Mammary epithelial cell (primary cell): ENCODE measurements at regions of chr7 and their contacts with region 1.

Region 1: GRCh38 chr7:41940760-41941343 is 238.0 kb upstream of the INHBA start:
- DNase-seq: peak; percentile 71
- H3K4me3 ChIP-seq: no peak overlapping the region
- H3K27ac ChIP-seq: no peak overlapping the region
- H3K4me1 ChIP-seq: peaks cover 5% of the 10 kb centered on the region
- H3K27me3 ChIP-seq: no peaks in the 10 kb centered on the region
- CTCF ChIP-seq: peak; percentile 71 to 77

Region 2: DNA sequence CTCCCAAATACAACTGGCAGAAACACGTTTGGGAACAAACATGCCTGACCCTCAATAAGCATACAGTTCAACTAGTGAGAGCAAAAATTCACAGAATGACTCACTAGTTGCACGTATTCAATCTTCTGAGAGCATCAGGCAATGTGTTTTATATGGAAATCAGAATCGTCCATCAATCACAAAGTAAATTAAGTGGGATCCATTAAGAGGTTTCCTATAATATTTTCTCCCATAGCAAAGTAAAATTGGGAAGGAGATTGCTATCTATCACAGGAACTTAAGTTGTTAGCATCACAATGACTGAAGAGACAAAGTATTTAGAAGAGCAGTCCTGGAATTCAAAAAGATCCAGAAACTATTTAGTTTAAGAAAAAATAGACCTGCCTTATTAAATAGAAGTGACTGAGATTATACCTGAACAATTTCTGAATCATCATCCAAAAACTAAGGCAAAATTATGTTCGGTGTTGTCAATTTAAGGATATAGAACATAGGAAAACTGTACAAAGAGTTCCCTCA is 266.3 kb before region 1 on chr7:
- CTCF ChIA-PET with region 1: no interaction called
- dilution Hi-C with region 1: no loop called
- in situ Hi-C with region 1: no loop called
- intact Hi-C with region 1: no loop called
- DNase-seq: no peak
- H3K4me3 ChIP-seq: no peak overlapping the region
- H3K27ac ChIP-seq: no peak overlapping the region
- H3K4me1 ChIP-seq: no peaks in the 10 kb centered on the region
- H3K27me3 ChIP-seq: no peaks in the 10 kb centered on the region
- CTCF ChIP-seq: no peak

Region 3: GRCh38 chr7:41792120-41792519 is 148.7 kb before region 1 on chr7:
- CTCF ChIA-PET with region 1: no interaction called
- dilution Hi-C with region 1: no loop called
- in situ Hi-C with region 1: no loop called
- intact Hi-C with region 1: no loop called
- DNase-seq: peak; percentile 67
- H3K4me3 ChIP-seq: no peak overlapping the region
- H3K27ac ChIP-seq: no peak overlapping the region
- H3K4me1 ChIP-seq: peaks cover 9% of the 10 kb centered on the region
- H3K27me3 ChIP-seq: no peaks in the 10 kb centered on the region
- CTCF ChIP-seq: no peak

Region 4: DNA sequence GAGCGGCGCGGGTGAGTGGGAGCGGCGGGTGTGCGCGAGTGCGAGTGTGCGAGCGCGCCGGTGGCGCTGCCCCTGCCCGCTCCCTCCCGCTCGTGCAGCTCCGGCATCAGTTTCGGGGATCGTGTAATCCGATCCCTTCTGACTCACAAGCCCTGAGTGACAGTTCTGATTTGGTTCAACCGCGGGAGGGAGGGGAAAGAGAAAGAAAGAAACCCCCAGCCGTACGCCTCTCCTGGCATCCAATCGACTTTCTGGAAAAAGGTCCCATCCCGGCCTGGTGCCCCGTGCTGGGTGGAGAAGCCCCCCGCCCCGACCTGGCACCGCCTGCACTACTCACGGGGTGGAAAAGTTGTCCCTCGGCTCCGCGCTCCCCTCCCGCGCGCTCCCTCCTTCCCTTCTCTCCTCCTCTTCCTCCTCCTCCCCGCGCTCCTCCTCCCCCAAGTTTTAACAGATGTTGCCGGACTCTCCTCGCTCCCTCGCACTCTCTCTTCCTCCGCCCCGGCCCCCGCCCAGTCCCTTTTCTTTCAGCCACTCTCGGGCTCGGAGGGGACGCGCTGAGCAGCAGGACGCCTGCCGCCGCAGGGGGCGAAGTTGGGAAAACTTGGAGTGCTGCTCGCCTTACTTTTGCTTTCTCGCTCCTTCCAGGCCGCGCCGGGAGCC is 296.4 kb after region 1 on chr7 and contains the start of gene GLI3:
- CTCF ChIA-PET with region 1: no interaction called
- dilution Hi-C with region 1: no loop called
- in situ Hi-C with region 1: no loop called
- intact Hi-C with region 1: loop called (anchors 1 kb)
- DNase-seq: peak; percentile 93
- H3K4me3 ChIP-seq: peak within 1 kb of the TSS; percentile 73 to 92 (median 73)
- H3K27ac ChIP-seq: peak within 1 kb of the TSS; percentile 81
- H3K4me1 ChIP-seq: peaks cover 31% of the 10 kb centered on the region
- H3K27me3 ChIP-seq: no peaks in the 10 kb centered on the region
- CTCF ChIP-seq: peak; percentile 5 to 43
- total RNA-seq, gene GLI3: 6.3 to 26.2 TPM

Region 5: DNA sequence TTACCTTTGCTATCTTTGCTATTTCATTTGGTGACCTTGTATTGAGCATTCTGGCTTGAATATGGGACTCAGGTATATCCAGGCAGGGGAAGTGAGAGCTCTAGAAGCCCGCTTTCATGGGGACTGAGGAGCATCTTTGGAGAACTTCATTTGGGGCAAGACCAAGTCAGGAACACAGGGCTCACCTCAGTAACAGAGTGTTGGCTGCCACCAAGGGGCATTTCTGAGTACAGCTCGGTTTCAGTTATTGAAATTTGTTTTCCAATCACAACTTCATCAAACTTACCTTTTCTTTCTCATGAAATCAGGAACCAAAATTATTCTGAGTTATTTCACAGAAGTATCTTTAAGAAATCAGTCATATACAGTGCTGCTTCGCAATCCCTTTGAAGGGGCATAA is 633.8 kb after region 1 on chr7:
- CTCF ChIA-PET with region 1: no interaction called
- dilution Hi-C with region 1: no loop called
- in situ Hi-C with region 1: loop called in 1 of 2 experiments (anchors 10 kb)
- intact Hi-C with region 1: loop called (anchors 1 kb)
- DNase-seq: no peak
- H3K4me3 ChIP-seq: no peak overlapping the region
- H3K27ac ChIP-seq: no peak overlapping the region
- H3K4me1 ChIP-seq: peaks cover 3% of the 10 kb centered on the region
- H3K27me3 ChIP-seq: no peaks in the 10 kb centered on the region
- CTCF ChIP-seq: peak; percentile 53 to 64

Region 6: GRCh38 chr7:42831718-42832431 is 891.0 kb after region 1 on chr7:
- CTCF ChIA-PET with region 1: interaction called, 6 read pairs
- dilution Hi-C with region 1: no loop called
- in situ Hi-C with region 1: loop called (anchors 5 to 10 kb)
- intact Hi-C with region 1: loop called (anchors 1 kb)
- DNase-seq: peak; percentile 30
- H3K4me3 ChIP-seq: no peak overlapping the region
- H3K27ac ChIP-seq: no peak overlapping the region
- H3K4me1 ChIP-seq: no peaks in the 10 kb centered on the region
- H3K27me3 ChIP-seq: no peaks in the 10 kb centered on the region
- CTCF ChIP-seq: peak; percentile 60 to 90

Region 7: GRCh38 chr7:42876182-42877068 is 935.6 kb after region 1 on chr7:
- CTCF ChIA-PET with region 1: interaction called, 5 read pairs
- dilution Hi-C with region 1: no loop called
- in situ Hi-C with region 1: no loop called
- intact Hi-C with region 1: loop called (anchors 2 kb)
- DNase-seq: peak; percentile 40
- H3K4me3 ChIP-seq: no peak overlapping the region
- H3K27ac ChIP-seq: no peak overlapping the region
- H3K4me1 ChIP-seq: no peaks in the 10 kb centered on the region
- H3K27me3 ChIP-seq: no peaks in the 10 kb centered on the region
- CTCF ChIP-seq: peak; percentile 77 to 84

Region 8: DNA sequence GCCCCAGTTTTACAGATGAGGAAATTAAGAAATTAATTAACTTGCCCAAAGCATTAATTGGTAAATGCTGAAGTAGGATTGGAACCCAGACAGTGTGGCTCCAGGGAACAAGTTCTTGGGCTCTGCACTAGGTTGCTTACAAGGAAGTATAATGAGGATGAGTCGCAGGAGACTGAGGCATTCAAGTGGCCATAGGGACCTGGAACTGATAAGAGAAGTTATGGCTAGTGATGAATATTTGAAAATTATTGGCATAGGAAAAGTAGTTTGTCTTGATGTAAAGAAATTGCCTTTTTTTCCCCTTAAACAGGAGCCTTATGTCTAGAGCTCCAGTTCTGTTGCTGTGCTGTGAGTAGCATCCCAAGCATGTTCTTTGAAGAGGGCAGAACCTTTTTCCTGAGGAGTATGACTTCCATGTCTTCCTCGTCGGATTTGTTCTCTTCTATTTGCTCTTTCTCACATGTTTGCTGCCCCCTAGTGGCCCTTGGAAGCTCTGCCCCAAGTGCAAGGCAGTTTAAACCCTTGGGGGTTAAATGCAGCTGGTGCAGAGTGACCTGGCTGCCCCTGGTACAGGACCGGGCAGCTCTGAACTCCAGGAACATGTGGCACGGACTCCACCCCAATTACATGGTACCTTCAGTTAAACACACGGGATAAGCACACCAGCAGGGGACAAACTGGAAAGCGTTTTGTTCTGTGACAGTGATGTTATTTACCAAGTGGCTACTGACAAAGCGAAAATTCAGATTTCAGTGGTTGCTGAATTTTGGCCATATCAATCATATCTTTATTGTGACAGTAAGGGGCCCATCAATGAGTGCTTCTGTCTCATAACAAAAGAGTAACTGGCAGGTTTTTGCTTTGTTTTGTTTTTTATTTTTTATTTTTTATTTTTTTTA is 1320.4 kb after region 1 on chr7:
- CTCF ChIA-PET with region 1: no interaction called
- dilution Hi-C with region 1: no loop called
- in situ Hi-C with region 1: no loop called
- intact Hi-C with region 1: loop called (anchors 5 kb)
- DNase-seq: peak; percentile 65
- H3K4me3 ChIP-seq: no peak overlapping the region
- H3K27ac ChIP-seq: no peak overlapping the region
- H3K4me1 ChIP-seq: peaks cover 3% of the 10 kb centered on the region
- H3K27me3 ChIP-seq: no peaks in the 10 kb centered on the region
- CTCF ChIP-seq: peak; percentile 94 to 95